Left cardiac atrium (tissue), 4 donors: ENCODE measurements at regions of chr16 and their contacts with region 1.

Region 1: GRCh38 chr16:58336332-58337089 is 41.7 kb upstream of the PRSS54 start:
- DNase-seq: peak; percentile 78
- ATAC-seq: peak; percentile 71 to 80

Region 2: GRCh38 chr16:58392215-58393137 is 56.0 kb after region 1 on chr16 and contains the start of gene GINS3:
- intact Hi-C with region 1: no loop called
- DNase-seq: peak; percentile 92
- ATAC-seq: peak; percentile 97 to 99
- total RNA-seq, gene GINS3: 5.0 to 5.6 TPM

Region 3: DNA sequence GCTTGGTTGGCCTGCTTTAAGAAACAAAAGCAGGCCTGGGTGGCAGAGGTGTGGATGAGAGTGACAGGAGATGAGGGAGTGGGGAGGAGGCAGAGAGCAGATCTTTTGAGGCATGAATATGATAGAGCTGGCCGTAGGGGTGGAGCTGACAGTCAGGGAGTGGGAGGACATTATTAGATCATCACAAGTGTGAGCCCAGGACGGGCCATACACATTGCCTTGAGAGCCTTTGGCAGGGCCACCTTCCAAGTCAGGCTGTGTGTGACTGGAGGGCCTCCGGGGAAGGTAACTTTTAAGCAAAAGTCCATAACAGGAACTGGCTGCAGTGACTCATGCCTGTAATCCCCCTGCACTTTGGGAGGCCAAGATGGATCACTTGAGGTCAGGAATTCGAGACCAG is 82.1 kb after region 1 on chr16:
- intact Hi-C with region 1: loop called in 1 of 2 experiments (anchors 5 kb)
- DNase-seq: peak; percentile 76
- ATAC-seq: peak; percentile 83 to 89

Region 4: GRCh38 chr16:58487566-58488351 is 151.2 kb after region 1 on chr16:
- intact Hi-C with region 1: loop called (anchors 2 to 5 kb)
- DNase-seq: peak; percentile 90
- ATAC-seq: peak; percentile 85 to 89

Region 5: GRCh38 chr16:58629572-58630104 is 293.1 kb after region 1 on chr16 and contains the start of gene CNOT1:
- intact Hi-C with region 1: loop called in 1 of 2 experiments (anchors 10 kb)
- DNase-seq: peak; percentile 97
- ATAC-seq: peak; percentile 95 to 96
- total RNA-seq, gene CNOT1: 74.2 to 92.9 TPM

Region 6: DNA sequence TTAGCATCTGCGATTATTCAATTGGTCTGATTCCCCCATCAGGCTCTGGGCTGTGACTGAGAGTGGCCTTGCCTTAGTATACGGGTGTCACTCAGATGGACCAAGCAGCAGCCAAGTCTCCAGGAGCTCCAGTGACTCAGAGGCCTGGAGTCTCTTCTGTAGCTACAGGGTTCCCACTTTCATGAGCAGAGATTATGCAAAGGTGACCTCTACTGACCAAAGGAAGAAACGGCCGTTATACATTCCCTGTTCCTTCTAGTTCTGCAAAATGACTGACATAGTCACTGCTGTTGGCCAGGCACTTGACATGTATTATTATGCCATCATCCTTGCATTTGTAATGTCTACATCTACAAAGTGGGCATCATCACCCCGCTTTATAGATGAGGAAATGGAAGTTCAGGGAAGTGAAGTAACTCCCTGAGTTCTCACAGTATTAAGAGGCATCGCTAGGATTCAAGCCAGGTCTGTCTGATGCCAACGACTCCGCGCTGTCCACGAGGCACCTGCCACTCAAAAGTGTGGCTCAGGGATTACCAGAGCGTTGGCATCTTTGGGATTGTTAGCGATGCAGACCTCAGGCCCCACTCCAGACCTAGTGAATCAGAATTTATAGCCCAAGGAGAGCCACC is 324.8 kb after region 1 on chr16:
- intact Hi-C with region 1: loop called in 1 of 2 experiments (anchors 10 kb)
- DNase-seq: peak; percentile 62
- ATAC-seq: peak; percentile 89 to 97